ENCODE measurements at regions of chr6 and their contacts with region 1.

Region 1: GRCh38 chr6:130132286-130132701 is 90.5 kb downstream of the SAMD3 start:
- DNase-seq: peak; percentile 30 to 89 (median 70)
- ATAC-seq: peak; percentile 85
- H3K4me3 ChIP-seq: peak overlapping the region; percentile 9 to 20
- H3K4me3 Mint-ChIP-seq: peak overlapping the region; percentile 68
- H3K27ac ChIP-seq: peak overlapping the region; percentile 71 to 73
- H3K27ac Mint-ChIP-seq: peak overlapping the region; percentile 93
- H3K4me1 ChIP-seq: peaks cover 61% of the 10 kb centered on the region
- H3K4me1 Mint-ChIP-seq: peaks cover 79% of the 10 kb centered on the region
- H3K27me3 ChIP-seq: no peaks in the 10 kb centered on the region
- H3K27me3 Mint-ChIP-seq: no peaks in the 10 kb centered on the region
- CTCF ChIP-seq: no peak

Region 2: GRCh38 chr6:130098317-130098716 is 34.0 kb before region 1 on chr6:
- CTCF ChIA-PET with region 1: no interaction called
- POLR2A ChIA-PET with region 1: no interaction called
- intact Hi-C with region 1: loop called in 1 of 2 experiments (anchors 5 kb)
- DNase-seq: no peak
- ATAC-seq: no peak
- H3K4me3 ChIP-seq: no peak overlapping the region
- H3K4me3 Mint-ChIP-seq: no peak overlapping the region
- H3K27ac ChIP-seq: no peak overlapping the region
- H3K27ac Mint-ChIP-seq: no peak overlapping the region
- H3K4me1 ChIP-seq: peaks cover 4% of the 10 kb centered on the region
- H3K4me1 Mint-ChIP-seq: peaks cover 12% of the 10 kb centered on the region
- H3K27me3 ChIP-seq: no peaks in the 10 kb centered on the region
- H3K27me3 Mint-ChIP-seq: no peaks in the 10 kb centered on the region
- CTCF ChIP-seq: no peak

Region 3: DNA sequence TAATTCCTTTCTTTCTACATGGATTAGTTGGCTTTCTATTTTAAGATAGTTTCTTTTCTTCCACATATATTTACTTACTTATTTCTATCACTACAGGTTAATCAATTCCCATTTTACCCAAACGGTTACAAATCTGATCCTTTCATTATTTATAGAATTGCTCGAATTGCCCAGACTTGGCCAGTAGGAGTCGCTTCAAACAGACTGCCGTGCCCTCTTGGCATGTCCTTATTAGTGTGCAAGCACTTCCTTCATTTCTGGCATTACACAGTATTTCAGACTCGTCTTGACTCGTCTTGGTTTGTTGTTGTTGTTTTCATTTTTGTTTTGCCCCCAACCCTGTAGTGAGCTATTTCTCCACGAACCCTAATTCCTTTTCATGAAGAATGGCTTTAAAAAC is 15.9 kb after region 1 on chr6:
- CTCF ChIA-PET with region 1: interaction called, 6 read pairs
- POLR2A ChIA-PET with region 1: interaction called, 3 read pairs
- intact Hi-C with region 1: loop called in 1 of 2 experiments (anchors 2 kb)
- DNase-seq: peak in 3 of 9 experiments; percentile 21 to 48 (median 33)
- ATAC-seq: peak; percentile 55
- H3K4me3 ChIP-seq: no peak overlapping the region
- H3K4me3 Mint-ChIP-seq: no peak overlapping the region
- H3K27ac ChIP-seq: peak overlapping the region in 1 of 2 experiments; percentile 22
- H3K27ac Mint-ChIP-seq: peak overlapping the region; percentile 25
- H3K4me1 ChIP-seq: no peaks in the 10 kb centered on the region
- H3K4me1 Mint-ChIP-seq: peaks cover 11% of the 10 kb centered on the region
- H3K27me3 ChIP-seq: no peaks in the 10 kb centered on the region
- H3K27me3 Mint-ChIP-seq: no peaks in the 10 kb centered on the region
- CTCF ChIP-seq: no peak

Region 4: DNA sequence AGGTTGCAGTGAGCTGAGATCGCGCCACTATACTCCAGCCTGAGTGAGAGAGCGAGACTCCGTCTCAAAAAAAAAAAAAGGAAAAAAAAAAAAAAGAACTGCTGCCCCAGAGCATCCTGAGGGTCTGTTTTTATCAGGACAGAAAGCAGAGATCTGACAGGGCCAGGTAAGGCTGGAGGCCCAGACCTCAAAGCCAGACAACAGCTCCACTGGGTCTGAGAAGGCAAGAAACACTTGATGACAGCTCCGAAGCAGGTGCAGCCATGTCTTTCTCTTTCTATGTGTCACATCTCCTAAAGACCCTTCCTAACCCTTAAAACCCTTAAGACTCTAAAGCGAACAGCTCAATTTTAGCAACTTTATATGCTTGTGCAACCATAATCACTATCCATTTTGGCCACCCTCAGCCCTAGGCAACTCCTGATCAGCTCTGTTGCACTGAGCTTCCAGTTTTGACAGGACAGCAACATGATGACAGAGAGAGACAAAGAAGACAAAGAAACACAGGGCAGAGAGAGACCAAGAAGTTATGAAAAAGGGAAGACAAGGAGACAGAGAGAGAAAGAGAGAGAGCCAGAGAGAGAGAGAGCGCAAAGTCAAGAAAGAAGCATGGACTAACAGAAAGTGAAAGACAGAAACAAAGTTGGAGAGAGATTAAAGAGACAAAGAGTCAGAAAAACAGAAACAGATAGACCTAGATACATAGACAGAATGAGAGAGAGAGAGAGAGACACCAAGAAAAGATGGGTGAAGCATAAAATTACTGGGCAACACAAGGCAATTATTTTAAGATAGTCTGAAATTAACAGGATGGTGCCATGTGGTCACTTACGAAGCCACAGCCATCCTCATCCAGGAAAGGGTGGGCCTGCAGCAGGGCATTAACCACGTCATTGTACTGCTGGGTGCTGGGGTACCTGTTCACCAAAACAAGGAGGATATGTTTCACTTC is 51.3 kb after region 1 on chr6:
- CTCF ChIA-PET with region 1: no interaction called
- POLR2A ChIA-PET with region 1: interaction called, 4 read pairs
- intact Hi-C with region 1: loop called (anchors 2 to 5 kb)
- DNase-seq: peak; percentile 6 to 86 (median 47)
- ATAC-seq: peak; percentile 92
- H3K4me3 ChIP-seq: peak overlapping the region; percentile 17 to 40
- H3K4me3 Mint-ChIP-seq: peak overlapping the region; percentile 59
- H3K27ac ChIP-seq: peak overlapping the region; percentile 67 to 82
- H3K27ac Mint-ChIP-seq: peak overlapping the region; percentile 91
- H3K4me1 ChIP-seq: peaks cover 41% of the 10 kb centered on the region
- H3K4me1 Mint-ChIP-seq: peaks cover 59% of the 10 kb centered on the region
- H3K27me3 ChIP-seq: no peaks in the 10 kb centered on the region
- H3K27me3 Mint-ChIP-seq: no peaks in the 10 kb centered on the region
- CTCF ChIP-seq: no peak

Measured in CD8-positive, alpha-beta T cell (primary cell).